ENCODE measurements at regions of chr17 and their contacts with region 1.

Region 1: DNA sequence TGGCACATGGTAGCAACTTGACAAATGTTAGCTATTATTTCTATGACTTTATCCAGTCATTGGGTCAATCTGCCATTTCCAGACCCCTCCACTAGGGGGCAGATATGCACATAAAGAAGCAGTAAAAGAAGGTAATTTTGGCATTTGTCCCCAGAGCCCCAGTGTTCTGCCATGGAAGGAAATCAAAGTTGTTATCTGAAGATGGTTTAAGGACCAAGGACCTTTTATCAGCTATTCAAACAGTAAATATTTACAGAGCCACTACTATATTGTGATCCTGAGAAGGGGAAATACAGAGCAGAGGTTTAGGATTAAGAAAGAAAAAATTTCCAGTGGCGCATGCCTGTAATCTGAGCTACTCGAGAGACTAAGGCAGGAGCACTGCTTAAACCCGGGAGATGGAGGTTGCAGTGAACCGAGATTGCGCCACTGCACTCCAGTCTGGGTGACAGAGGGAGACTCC is 20.0 kb downstream of the TRAF4 start:
- DNase-seq: peak; percentile 78 to 81
- ATAC-seq: peak; percentile 51 to 69; a peak in 5 of 6 replicates
- H3K4me3 ChIP-seq: no peak overlapping the region
- H3K27ac ChIP-seq: no peak overlapping the region
- H3K4me1 ChIP-seq: peaks cover 15% of the 10 kb centered on the region
- CTCF ChIP-seq: peak; percentile 97
- EP300 ChIP-seq: no peak
- POLR2A ChIP-seq: no peak
- RAD21 ChIP-seq: peak; percentile 87 to 89

Region 2: GRCh38 chr17:28634206-28634856 is 129.5 kb before region 1 on chr17:
- CTCF ChIA-PET with region 1: no interaction called
- POLR2A ChIA-PET with region 1: no interaction called
- DNase-seq: no peak
- ATAC-seq: no peak
- H3K4me3 ChIP-seq: no peak overlapping the region
- H3K27ac ChIP-seq: no peak overlapping the region
- H3K4me1 ChIP-seq: no peaks in the 10 kb centered on the region
- CTCF ChIP-seq: no peak
- EP300 ChIP-seq: no peak
- POLR2A ChIP-seq: no peak
- RAD21 ChIP-seq: no peak

Region 3: DNA sequence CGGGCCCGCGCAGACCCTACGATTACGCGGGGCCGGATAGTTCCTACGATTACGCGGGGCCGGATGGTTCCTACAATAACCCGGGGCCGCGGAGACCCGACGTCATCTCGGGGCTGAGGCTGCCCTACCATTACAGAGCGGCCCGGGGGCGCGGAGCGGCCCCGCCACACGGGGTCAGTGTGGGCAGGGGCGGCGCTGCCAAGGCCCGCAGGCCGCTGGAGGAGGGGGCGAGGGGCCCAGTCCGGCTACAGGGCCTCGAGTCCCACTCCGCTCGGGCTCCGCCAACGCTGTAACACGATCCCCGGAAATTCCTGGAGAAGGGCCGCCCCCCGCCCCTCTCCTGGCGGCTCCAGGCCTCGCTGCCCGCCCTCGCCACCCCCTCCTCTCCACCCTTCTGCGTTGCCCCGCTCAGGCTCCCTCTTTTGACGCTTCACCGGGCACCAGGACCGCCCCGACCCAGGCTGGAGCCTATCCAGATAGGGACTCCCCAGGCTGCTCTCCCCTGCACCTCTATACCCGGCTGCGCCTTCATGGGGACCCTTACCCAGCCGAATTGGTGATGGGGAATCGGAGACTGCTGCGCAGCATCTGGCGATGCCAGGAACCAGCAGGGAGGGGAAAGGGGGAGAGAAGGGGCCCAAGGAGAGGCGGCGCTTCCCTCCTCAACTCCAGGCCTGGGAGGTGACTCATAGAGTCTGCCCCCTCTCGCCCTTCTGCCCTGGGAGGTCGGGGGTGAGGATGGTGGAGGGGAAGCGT is 46.1 kb before region 1 on chr17 and contains the start of gene RAB34:
- CTCF ChIA-PET with region 1: interaction called, 977 read pairs
- POLR2A ChIA-PET with region 1: interaction called, 3 read pairs
- DNase-seq: peak; percentile 73 to 90
- ATAC-seq: peak; percentile 67 to 69
- H3K4me3 ChIP-seq: peak within 1 kb of the TSS; percentile 77
- H3K27ac ChIP-seq: peak within 1 kb of the TSS; percentile 96
- H3K4me1 ChIP-seq: peaks cover 37% of the 10 kb centered on the region
- CTCF ChIP-seq: peak; percentile 55
- EP300 ChIP-seq: no peak
- POLR2A ChIP-seq: peak; percentile 48
- RAD21 ChIP-seq: no peak
- polyA plus RNA-seq, gene RAB34: 288 and 328 TPM in 2 replicates

Region 4: GRCh38 chr17:28777178-28777577 is 13.3 kb after region 1 on chr17:
- CTCF ChIA-PET with region 1: interaction called, 122 read pairs
- POLR2A ChIA-PET with region 1: interaction called, 3 read pairs
- DNase-seq: no peak
- ATAC-seq: peak; percentile 30 to 46; a peak in 3 of 6 replicates
- H3K4me3 ChIP-seq: no peak overlapping the region
- H3K27ac ChIP-seq: no peak overlapping the region
- H3K4me1 ChIP-seq: peaks cover 3% of the 10 kb centered on the region; the same call in 1 of the 3 replicates
- CTCF ChIP-seq: no peak
- EP300 ChIP-seq: no peak
- POLR2A ChIP-seq: no peak
- RAD21 ChIP-seq: no peak

Region 5: DNA sequence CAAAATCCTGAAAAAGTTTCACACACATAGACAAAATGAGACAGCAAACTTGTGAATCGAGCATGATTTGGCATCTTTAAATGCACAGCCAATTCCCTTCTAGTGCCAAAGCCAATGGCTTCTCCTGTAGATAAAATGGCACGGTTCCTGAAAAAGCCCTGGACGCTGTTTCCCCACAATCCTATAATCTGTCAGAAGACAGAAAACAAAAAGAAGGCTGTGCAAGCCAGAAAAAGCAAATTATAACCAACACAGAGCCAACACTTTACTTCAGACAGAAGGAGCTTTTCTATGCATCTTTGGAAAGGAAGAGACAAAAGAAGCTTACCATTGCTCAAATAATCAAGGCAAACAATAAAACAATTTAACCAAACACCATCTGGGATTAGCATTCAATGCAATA is 55.0 kb after region 1 on chr17:
- CTCF ChIA-PET with region 1: interaction called, 99 read pairs
- POLR2A ChIA-PET with region 1: interaction called, 3 read pairs
- DNase-seq: no peak
- ATAC-seq: no peak
- H3K4me3 ChIP-seq: no peak overlapping the region
- H3K27ac ChIP-seq: no peak overlapping the region
- H3K4me1 ChIP-seq: no peaks in the 10 kb centered on the region
- CTCF ChIP-seq: no peak
- EP300 ChIP-seq: no peak
- POLR2A ChIP-seq: no peak
- RAD21 ChIP-seq: no peak

Region 6: DNA sequence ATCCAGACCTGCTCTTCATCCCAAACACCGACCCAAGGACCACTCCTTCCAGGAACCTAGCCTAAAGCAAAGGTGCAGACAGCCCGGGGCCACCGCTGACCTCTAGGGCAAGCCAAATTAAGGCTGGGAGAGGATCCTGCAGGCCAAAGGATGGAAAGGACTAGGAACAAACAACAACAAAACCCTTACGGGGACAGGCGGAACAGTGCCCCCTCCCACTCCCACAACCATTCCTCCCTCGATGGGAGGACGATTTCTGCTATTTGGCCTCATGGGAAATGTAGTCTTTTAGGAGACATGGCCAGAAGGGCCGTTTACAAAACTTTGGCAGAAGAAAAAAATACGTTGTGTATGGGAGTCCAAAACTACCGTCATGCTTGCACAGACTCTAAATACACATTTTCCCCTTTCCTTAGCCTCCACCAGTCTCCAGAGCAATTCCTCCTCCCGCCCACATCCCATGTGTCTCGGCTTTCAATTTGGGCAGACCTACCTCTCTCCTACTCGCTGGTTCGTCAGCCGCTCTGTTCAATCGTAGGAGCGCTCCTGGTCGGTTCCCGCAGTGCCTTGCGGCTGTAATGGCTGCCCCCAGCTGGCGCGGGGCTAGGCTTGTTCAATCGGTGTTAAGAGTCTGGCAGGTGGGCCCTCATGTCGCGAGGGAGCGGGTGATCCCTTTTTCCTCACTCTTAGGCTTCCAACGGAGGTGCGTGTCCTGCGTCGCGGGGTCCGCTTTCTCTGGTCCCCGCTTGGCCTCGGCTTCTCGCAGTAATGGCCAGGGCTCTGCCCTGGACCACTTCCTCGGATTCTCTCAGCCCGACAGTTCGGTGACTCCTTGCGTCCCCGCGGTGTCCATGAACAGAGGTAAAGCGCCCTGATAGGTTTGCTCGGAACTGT is 90.9 kb after region 1 on chr17 and contains the start of gene ERAL1:
- CTCF ChIA-PET with region 1: interaction called, 58 read pairs
- POLR2A ChIA-PET with region 1: no interaction called
- DNase-seq: peak; percentile 90 to 98
- ATAC-seq: peak; percentile 100
- H3K4me3 ChIP-seq: peak within 1 kb of the TSS; percentile 63
- H3K27ac ChIP-seq: peak within 1 kb of the TSS; percentile 84 to 88
- H3K4me1 ChIP-seq: peaks cover 11% of the 10 kb centered on the region; the same call in 2 of the 3 replicates
- CTCF ChIP-seq: no peak
- EP300 ChIP-seq: no peak
- POLR2A ChIP-seq: peak; percentile 87
- RAD21 ChIP-seq: 0 out of 5 replicates have a peak, but pooled peaks of 1 of the 2 experiments have one; percentile 17
- polyA plus RNA-seq, gene ERAL1: 88.3 and 123 TPM in 2 replicates

Region 7: GRCh38 chr17:28889996-28890395 is 126.2 kb after region 1 on chr17:
- CTCF ChIA-PET with region 1: interaction called, 493 read pairs
- POLR2A ChIA-PET with region 1: no interaction called
- DNase-seq: no peak
- ATAC-seq: no peak
- H3K4me3 ChIP-seq: no peak overlapping the region
- H3K27ac ChIP-seq: no peak overlapping the region
- H3K4me1 ChIP-seq: no peaks in the 10 kb centered on the region
- CTCF ChIP-seq: no peak
- EP300 ChIP-seq: no peak
- POLR2A ChIP-seq: no peak
- RAD21 ChIP-seq: no peak

Region 8: DNA sequence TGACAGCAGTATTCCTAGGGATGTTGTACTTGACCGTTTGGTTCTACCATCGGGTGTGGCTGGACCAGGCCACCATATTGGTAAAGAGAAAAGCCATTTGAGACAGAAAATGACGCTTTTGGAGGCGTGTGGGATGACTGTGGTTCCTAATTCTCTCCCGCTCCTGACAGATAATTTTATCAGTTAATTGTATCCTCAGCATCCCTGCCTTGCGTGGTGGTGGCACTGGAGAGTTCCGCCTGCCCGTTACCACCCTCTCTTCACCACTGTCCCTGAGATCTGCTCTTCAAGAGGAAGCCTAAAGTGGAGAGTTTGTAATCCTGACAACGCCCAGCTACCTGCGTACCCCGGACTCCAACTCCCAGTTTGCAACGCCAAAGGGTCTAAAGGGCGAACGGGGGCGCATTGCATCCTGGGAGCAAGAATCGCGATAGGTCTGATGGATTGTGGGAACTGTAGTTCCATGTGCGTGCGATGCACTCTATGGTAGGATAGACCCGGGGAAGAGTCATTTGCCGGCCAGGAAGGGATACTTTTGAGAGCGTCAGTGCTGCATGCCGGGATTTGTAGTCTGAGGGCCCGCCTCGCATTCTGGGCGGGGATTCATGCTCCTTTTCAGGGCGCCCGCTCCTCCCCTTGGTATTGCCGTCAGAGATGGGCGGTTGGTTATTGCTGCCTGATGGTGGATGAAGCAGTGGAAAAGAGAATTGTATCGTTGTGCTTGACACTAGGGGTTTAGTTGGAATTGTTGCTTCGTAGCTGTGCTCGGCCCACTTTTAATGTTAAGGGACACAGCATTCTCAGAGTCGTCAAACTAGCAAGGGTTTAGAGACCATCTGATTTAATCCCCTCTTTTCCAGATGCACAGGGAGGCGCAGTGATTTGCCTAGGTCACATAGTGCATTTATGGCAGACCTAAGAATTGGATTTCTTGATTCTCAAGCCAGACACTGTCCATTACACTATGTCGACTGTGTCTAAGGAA is 188.4 kb after region 1 on chr17:
- CTCF ChIA-PET with region 1: interaction called, 17 read pairs
- POLR2A ChIA-PET with region 1: interaction called, 11 read pairs
- DNase-seq: peak; percentile 100
- ATAC-seq: peak; percentile 75 to 91
- H3K4me3 ChIP-seq: peak overlapping the region; percentile 56
- H3K27ac ChIP-seq: peak overlapping the region; percentile 89 to 91
- H3K4me1 ChIP-seq: peaks cover 21% of the 10 kb centered on the region
- CTCF ChIP-seq: no peak
- EP300 ChIP-seq: no peak
- POLR2A ChIP-seq: peak; percentile 16
- RAD21 ChIP-seq: no peak

Measured in A549 (cell line).